ENCODE measurements at regions of chr7 and their contacts with region 1.

Region 1: GRCh38 chr7:111012799-111013675 is 77.9 kb upstream of the LRRN3 start:
- DNase-seq: peak; percentile 79
- ATAC-seq: peak; percentile 91
- H3K4me3 Mint-ChIP-seq: peak overlapping the region; percentile 79
- H3K27ac Mint-ChIP-seq: peak overlapping the region; percentile 90
- H3K4me1 Mint-ChIP-seq: peaks cover 65% of the 10 kb centered on the region
- H3K27me3 Mint-ChIP-seq: no peaks in the 10 kb centered on the region

Region 2: DNA sequence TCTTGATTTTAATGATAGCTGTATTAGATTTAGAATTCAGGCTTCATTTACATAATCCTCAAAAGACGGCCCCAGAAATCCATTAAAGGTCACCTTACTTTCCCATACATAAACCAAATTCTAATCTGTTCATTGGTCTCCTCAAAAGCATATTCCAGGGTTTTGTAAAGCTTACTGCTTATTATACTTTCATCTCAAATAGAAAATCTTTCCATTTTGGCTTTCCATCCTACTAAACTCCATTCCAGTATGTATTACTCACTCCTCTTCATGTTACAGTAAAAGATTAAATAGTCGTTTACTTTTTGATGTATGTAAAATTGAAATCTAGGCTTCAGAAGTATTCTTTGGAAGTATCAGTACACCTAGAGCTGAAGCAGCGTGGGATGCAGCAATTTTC is 65.6 kb before region 1 on chr7:
- CTCF ChIA-PET with region 1: no interaction called
- POLR2A ChIA-PET with region 1: no interaction called
- DNase-seq: no peak
- ATAC-seq: no peak
- H3K4me3 Mint-ChIP-seq: no peak overlapping the region
- H3K27ac Mint-ChIP-seq: no peak overlapping the region
- H3K4me1 Mint-ChIP-seq: peaks cover 8% of the 10 kb centered on the region
- H3K27me3 Mint-ChIP-seq: no peaks in the 10 kb centered on the region

Region 3: GRCh38 chr7:111029574-111030251 is 16.7 kb after region 1 on chr7:
- CTCF ChIA-PET with region 1: interaction called, 5 read pairs
- POLR2A ChIA-PET with region 1: interaction called, 10 read pairs
- DNase-seq: peak; percentile 37
- ATAC-seq: no peak
- H3K4me3 Mint-ChIP-seq: peak overlapping the region; percentile 32
- H3K27ac Mint-ChIP-seq: peak overlapping the region; percentile 72
- H3K4me1 Mint-ChIP-seq: peaks cover 55% of the 10 kb centered on the region
- H3K27me3 Mint-ChIP-seq: no peaks in the 10 kb centered on the region

Region 4: GRCh38 chr7:111083413-111083812 is 70.4 kb after region 1 on chr7:
- CTCF ChIA-PET with region 1: interaction called, 8 read pairs
- POLR2A ChIA-PET with region 1: interaction called, 25 read pairs
- DNase-seq: peak; percentile 86
- ATAC-seq: peak; percentile 88
- H3K4me3 Mint-ChIP-seq: peak overlapping the region; percentile 69
- H3K27ac Mint-ChIP-seq: peak overlapping the region; percentile 93
- H3K4me1 Mint-ChIP-seq: peaks cover 76% of the 10 kb centered on the region
- H3K27me3 Mint-ChIP-seq: no peaks in the 10 kb centered on the region

Region 5: GRCh38 chr7:111089822-111090426 is 76.9 kb after region 1 on chr7:
- CTCF ChIA-PET with region 1: interaction called, 5 read pairs
- POLR2A ChIA-PET with region 1: interaction called, 24 read pairs
- DNase-seq: no peak
- ATAC-seq: no peak
- H3K4me3 Mint-ChIP-seq: peak overlapping the region; percentile 95
- H3K27ac Mint-ChIP-seq: no peak overlapping the region
- H3K4me1 Mint-ChIP-seq: peaks cover 47% of the 10 kb centered on the region
- H3K27me3 Mint-ChIP-seq: no peaks in the 10 kb centered on the region

Region 6: GRCh38 chr7:111098011-111098925 is 85.2 kb after region 1 on chr7:
- CTCF ChIA-PET with region 1: interaction called, 12 read pairs
- POLR2A ChIA-PET with region 1: interaction called, 24 read pairs
- DNase-seq: peak; percentile 80
- ATAC-seq: peak; percentile 77
- H3K4me3 Mint-ChIP-seq: peak overlapping the region; percentile 95
- H3K27ac Mint-ChIP-seq: peak overlapping the region; percentile 65
- H3K4me1 Mint-ChIP-seq: peaks cover 53% of the 10 kb centered on the region
- H3K27me3 Mint-ChIP-seq: no peaks in the 10 kb centered on the region